ENCODE measurements at regions of chr20 and their contacts with region 1.

Region 1: DNA sequence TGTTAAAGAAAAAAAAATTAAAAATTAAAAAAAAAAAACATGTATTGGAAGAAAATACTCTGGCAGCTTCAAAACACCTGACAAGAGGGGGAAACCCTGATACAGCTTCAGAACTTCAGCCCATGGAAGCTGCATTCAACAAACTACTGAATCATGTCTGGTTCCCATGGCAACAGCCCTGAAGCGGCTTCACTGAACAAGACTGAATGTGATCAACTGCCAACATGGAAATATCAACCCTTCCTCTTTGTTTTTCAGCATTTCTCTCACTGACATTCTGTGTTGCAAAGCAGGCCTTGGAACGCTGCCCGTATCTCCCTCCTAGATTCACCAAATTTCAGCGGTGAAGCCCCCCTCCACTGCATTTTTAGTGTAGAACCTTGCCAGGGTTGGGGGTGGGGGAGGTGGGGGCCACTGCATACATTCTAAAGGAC is 91.3 kb upstream of the SHLD1 start:
- DNase-seq: no peak
- H3K4me3 ChIP-seq: peak overlapping the region; percentile 14 to 36 (median 25)
- H3K27ac ChIP-seq: peak overlapping the region; percentile 85 to 94 (median 87)
- H3K4me1 ChIP-seq: peaks cover 33 to 63% (median 60%) of the 10 kb centered on the region in 4 donors
- H3K27me3 ChIP-seq: no peaks in the 10 kb centered on the region
- CTCF ChIP-seq: no peak
- EP300 ChIP-seq: no peak
- POLR2A ChIP-seq: no peak

Region 2: GRCh38 chr20:5529331-5530148 is 129.4 kb before region 1 on chr20:
- intact Hi-C with region 1: no loop called
- DNase-seq: peak; percentile 95
- H3K4me3 ChIP-seq: no peak overlapping the region
- H3K27ac ChIP-seq: no peak overlapping the region
- H3K4me1 ChIP-seq: peaks cover 10 to 16% (median 11%) of the 10 kb centered on the region in 4 donors
- H3K27me3 ChIP-seq: no peaks in the 10 kb centered on the region
- CTCF ChIP-seq: peak; percentile 62 to 87 (median 67)
- EP300 ChIP-seq: no peak
- POLR2A ChIP-seq: no peak

Region 3: DNA sequence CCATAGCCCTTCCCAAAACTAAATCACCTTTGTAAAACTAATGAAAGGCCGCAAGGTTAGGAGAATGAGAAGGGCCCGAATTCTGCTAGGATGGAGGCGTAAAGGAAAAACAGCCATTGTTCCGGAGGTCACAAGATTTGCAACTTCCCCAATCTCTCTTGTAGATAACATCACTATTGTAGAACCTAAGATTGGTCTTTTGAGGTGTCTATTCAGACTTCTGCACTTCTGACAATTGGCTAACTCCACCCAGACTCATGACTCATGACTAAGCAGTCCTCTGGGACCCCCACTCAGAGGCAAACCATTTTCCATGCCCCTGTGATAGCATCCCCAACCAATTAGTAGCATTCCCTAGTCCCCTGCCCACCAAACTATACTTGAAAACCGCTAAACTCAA is 119.2 kb before region 1 on chr20:
- intact Hi-C with region 1: no loop called
- DNase-seq: no peak
- H3K4me3 ChIP-seq: no peak overlapping the region
- H3K27ac ChIP-seq: no peak overlapping the region
- H3K4me1 ChIP-seq: no peaks in the 10 kb centered on the region
- H3K27me3 ChIP-seq: no peaks in the 10 kb centered on the region
- CTCF ChIP-seq: no peak
- EP300 ChIP-seq: no peak
- POLR2A ChIP-seq: no peak

Region 4: GRCh38 chr20:5608442-5609161 is 50.3 kb before region 1 on chr20:
- intact Hi-C with region 1: no loop called
- DNase-seq: peak; percentile 31
- H3K4me3 ChIP-seq: peak overlapping the region; percentile 69 to 96 (median 81)
- H3K27ac ChIP-seq: peak overlapping the region; percentile 95 to 99 (median 96)
- H3K4me1 ChIP-seq: peaks cover 28 to 76% (median 61%) of the 10 kb centered on the region in 4 donors
- H3K27me3 ChIP-seq: no peaks in the 10 kb centered on the region
- CTCF ChIP-seq: no peak
- EP300 ChIP-seq: no peak
- POLR2A ChIP-seq: no peak

Region 5: DNA sequence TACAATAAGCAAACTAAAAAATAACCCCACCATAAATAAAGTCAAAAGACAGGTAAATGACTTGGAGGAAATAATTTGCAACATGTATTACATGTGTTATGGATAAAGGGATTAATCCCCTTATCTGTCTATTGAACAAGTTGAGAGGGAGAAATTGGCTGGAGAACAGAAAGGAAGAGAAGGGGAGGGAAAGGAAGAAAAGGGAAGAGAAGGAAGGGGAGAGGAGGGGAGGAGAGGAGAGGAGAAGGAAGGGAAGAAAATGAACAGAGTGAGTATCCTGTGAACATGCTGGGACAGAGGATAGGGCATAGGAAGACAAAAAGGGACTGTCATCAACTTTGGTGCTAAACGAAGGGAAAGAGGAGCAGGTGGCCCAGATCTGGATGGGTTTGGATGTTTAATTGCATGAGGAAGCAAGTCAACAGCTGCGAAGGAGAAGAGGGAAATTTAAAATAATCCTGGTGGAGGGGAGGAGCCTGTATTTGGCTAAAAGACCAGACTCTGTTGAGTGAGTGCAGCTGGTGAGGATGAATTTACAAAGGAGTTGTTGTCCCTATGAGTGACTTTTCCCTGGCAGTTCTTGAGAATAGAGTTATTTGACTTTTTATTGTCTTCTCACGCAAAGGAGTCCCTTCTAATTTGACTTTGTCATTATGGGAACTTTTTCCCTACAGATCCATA is 77.1 kb after region 1 on chr20:
- intact Hi-C with region 1: loop called (anchors 5 kb)
- DNase-seq: no peak
- H3K4me3 ChIP-seq: no peak overlapping the region
- H3K27ac ChIP-seq: peak overlapping the region; percentile 20 to 46 (median 20)
- H3K4me1 ChIP-seq: peaks cover 11 to 51% (median 44%) of the 10 kb centered on the region in 4 donors
- H3K27me3 ChIP-seq: no peaks in the 10 kb centered on the region
- CTCF ChIP-seq: no peak
- EP300 ChIP-seq: no peak
- POLR2A ChIP-seq: no peak

Region 6: GRCh38 chr20:5766085-5766764 is 107.3 kb after region 1 on chr20:
- intact Hi-C with region 1: no loop called
- DNase-seq: no peak
- H3K4me3 ChIP-seq: no peak overlapping the region
- H3K27ac ChIP-seq: peak overlapping the region in 3 of 4 donors; percentile 39 to 73 (median 71)
- H3K4me1 ChIP-seq: peaks cover 5 to 13% (median 11%) of the 10 kb centered on the region in 4 donors
- H3K27me3 ChIP-seq: no peaks in the 10 kb centered on the region
- CTCF ChIP-seq: no peak
- EP300 ChIP-seq: peak; percentile 72
- POLR2A ChIP-seq: no peak